CD4-positive, alpha-beta T cell (primary cell): ENCODE measurements at regions of chr1 and their contacts with region 1.

Region 1: GRCh38 chr1:202888531-202889360 is at the start of gene RABIF:
- DNase-seq: peak; percentile 94 to 99 (median 96)
- ATAC-seq: peak; percentile 90
- H3K4me3 ChIP-seq: peak within 1 kb of the TSS; percentile 77
- H3K4me3 Mint-ChIP-seq: peak within 1 kb of the TSS; percentile 99
- H3K27ac ChIP-seq: peak within 1 kb of the TSS; percentile 87 to 95
- H3K27ac Mint-ChIP-seq: peak within 1 kb of the TSS; percentile 94
- H3K4me1 ChIP-seq: peaks cover 20% of the 10 kb centered on the region
- H3K4me1 Mint-ChIP-seq: peaks cover 24% of the 10 kb centered on the region
- H3K27me3 ChIP-seq: no peaks in the 10 kb centered on the region
- H3K27me3 Mint-ChIP-seq: no peaks in the 10 kb centered on the region
- CTCF ChIP-seq: peak; percentile 16
- total RNA-seq, gene RABIF: 9.1 to 9.2 TPM

Region 2: GRCh38 chr1:202144402-202145067 is 744.2 kb before region 1 on chr1 and contains the start of gene ARL8A:
- CTCF ChIA-PET with region 1: no interaction called
- POLR2A ChIA-PET with region 1: no interaction called
- intact Hi-C with region 1: loop called in 1 of 2 experiments (anchors 10 kb)
- DNase-seq: peak; percentile 35 to 83 (median 65)
- ATAC-seq: peak; percentile 75
- H3K4me3 ChIP-seq: peak within 1 kb of the TSS; percentile 89
- H3K4me3 Mint-ChIP-seq: peak within 1 kb of the TSS; percentile 97
- H3K27ac ChIP-seq: peak within 1 kb of the TSS; percentile 69 to 71
- H3K27ac Mint-ChIP-seq: peak within 1 kb of the TSS; percentile 94
- H3K4me1 ChIP-seq: peaks cover 40% of the 10 kb centered on the region
- H3K4me1 Mint-ChIP-seq: peaks cover 45% of the 10 kb centered on the region
- H3K27me3 ChIP-seq: no peaks in the 10 kb centered on the region
- H3K27me3 Mint-ChIP-seq: no peaks in the 10 kb centered on the region
- CTCF ChIP-seq: no peak
- total RNA-seq, gene ARL8A: 73.5 to 73.8 TPM

Region 3: DNA sequence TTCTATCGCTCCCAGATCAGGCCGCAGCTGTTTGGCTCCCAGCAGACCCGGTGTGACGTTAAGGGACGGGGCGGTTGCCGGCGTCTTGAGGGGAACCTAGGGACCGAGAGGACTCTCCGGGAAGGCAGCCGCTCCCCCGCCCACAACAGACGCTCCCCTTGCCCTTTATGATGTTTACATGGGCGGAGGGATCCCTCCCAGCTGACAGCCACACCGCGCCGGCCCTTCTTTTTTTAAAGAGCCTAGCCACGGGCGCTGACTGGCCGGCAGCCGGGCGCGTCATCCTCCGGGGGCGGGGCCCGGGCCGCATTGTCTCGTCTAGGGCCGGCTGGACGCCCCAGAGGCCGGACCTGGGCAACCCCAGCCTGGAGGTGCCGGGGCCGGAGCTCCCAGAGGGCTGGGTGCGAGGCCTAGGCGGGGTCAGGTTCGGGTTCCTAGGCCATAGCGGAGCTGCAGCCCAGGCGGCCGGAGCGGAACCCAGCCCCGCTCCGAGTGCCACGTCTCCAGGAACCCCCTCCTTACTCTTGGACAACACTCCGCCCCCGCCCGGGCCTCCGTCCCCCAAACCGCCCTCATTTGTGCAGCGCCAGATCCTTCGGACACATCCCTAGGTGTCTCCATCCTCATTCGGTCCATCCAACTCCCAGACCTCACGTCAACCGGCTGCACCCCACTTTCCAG is 78.0 kb before region 1 on chr1 and contains the start of gene PCAT6:
- CTCF ChIA-PET with region 1: interaction called, 4 read pairs
- POLR2A ChIA-PET with region 1: interaction called, 8 read pairs
- intact Hi-C with region 1: loop called (anchors 2 to 5 kb)
- DNase-seq: peak; percentile 67 to 93 (median 81)
- ATAC-seq: peak; percentile 67
- H3K4me3 ChIP-seq: peak within 1 kb of the TSS; percentile 96
- H3K4me3 Mint-ChIP-seq: peak within 1 kb of the TSS; percentile 90
- H3K27ac ChIP-seq: peak within 1 kb of the TSS in 1 of 2 donors; percentile 35
- H3K27ac Mint-ChIP-seq: peak within 1 kb of the TSS; percentile 80
- H3K4me1 ChIP-seq: peaks cover 33% of the 10 kb centered on the region
- H3K4me1 Mint-ChIP-seq: peaks cover 38% of the 10 kb centered on the region
- H3K27me3 ChIP-seq: no peaks in the 10 kb centered on the region
- H3K27me3 Mint-ChIP-seq: no peaks in the 10 kb centered on the region
- CTCF ChIP-seq: no peak
- total RNA-seq, gene PCAT6: 0.91 to 1.3 TPM

Region 4: GRCh38 chr1:202821452-202821851 is 67.3 kb before region 1 on chr1:
- CTCF ChIA-PET with region 1: no interaction called
- POLR2A ChIA-PET with region 1: no interaction called
- intact Hi-C with region 1: no loop called
- DNase-seq: no peak
- ATAC-seq: no peak
- H3K4me3 ChIP-seq: no peak overlapping the region
- H3K4me3 Mint-ChIP-seq: no peak overlapping the region
- H3K27ac ChIP-seq: no peak overlapping the region
- H3K27ac Mint-ChIP-seq: no peak overlapping the region
- H3K4me1 ChIP-seq: no peaks in the 10 kb centered on the region
- H3K4me1 Mint-ChIP-seq: no peaks in the 10 kb centered on the region
- H3K27me3 ChIP-seq: no peaks in the 10 kb centered on the region
- H3K27me3 Mint-ChIP-seq: peaks cover 3% of the 10 kb centered on the region
- CTCF ChIP-seq: no peak

Region 5: GRCh38 chr1:202919615-202920014 is 30.9 kb after region 1 on chr1:
- CTCF ChIA-PET with region 1: no interaction called
- POLR2A ChIA-PET with region 1: no interaction called
- intact Hi-C with region 1: no loop called
- DNase-seq: no peak
- ATAC-seq: no peak
- H3K4me3 ChIP-seq: no peak overlapping the region
- H3K4me3 Mint-ChIP-seq: no peak overlapping the region
- H3K27ac ChIP-seq: no peak overlapping the region
- H3K27ac Mint-ChIP-seq: no peak overlapping the region
- H3K4me1 ChIP-seq: peaks cover 3% of the 10 kb centered on the region
- H3K4me1 Mint-ChIP-seq: peaks cover 24% of the 10 kb centered on the region
- H3K27me3 ChIP-seq: no peaks in the 10 kb centered on the region
- H3K27me3 Mint-ChIP-seq: no peaks in the 10 kb centered on the region
- CTCF ChIP-seq: no peak

Region 6: DNA sequence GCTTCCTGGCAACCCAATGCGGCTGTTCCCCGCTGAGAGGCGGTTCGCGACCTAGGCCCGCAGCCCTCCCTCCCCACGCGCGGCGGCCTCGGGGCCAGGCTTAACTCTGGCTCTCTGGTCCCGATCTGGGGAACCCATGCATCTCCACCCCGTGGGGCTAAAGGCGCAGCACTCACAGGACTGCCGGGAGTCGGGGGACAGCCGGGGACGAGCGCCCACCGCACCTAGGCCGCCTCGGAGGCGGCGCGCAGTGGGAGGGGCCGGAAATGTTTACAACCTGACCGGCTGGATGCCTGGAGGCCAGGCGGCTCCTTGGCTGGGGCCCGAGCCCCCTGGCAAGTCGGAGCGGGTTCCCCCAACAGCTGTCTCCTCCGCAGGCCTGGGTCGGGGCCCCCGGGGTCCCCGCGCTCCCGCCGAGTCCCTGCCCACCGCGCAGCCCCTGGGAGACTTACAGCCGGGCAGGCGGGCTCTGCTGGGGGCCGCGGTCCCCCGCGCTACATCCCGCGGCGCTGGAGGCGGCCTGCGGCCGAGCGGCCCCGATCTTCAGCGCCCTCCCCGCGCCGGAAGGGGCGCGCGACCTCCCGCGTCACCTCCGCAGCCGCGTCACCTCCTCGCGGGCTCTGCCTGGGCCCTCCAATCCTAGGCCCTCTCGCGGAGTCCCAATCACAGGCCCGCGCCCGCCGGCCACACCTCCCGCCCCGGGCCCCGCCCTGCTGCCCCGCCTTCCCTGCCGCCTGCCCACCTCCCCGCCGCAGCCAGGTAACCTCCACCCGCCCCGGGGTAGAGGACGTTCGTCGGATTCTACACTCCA is 69.2 kb after region 1 on chr1 and contains the start of gene ADIPOR1:
- CTCF ChIA-PET with region 1: no interaction called
- POLR2A ChIA-PET with region 1: interaction called, 3 read pairs
- intact Hi-C with region 1: loop called in 1 of 2 experiments (anchors 2 kb)
- DNase-seq: peak; percentile 88 to 97 (median 95)
- ATAC-seq: peak; percentile 96
- H3K4me3 ChIP-seq: peak within 1 kb of the TSS; percentile 98
- H3K4me3 Mint-ChIP-seq: peak within 1 kb of the TSS; percentile 98
- H3K27ac ChIP-seq: peak within 1 kb of the TSS; percentile 81
- H3K27ac Mint-ChIP-seq: peak within 1 kb of the TSS; percentile 95
- H3K4me1 ChIP-seq: peaks cover 38% of the 10 kb centered on the region
- H3K4me1 Mint-ChIP-seq: peaks cover 55% of the 10 kb centered on the region
- H3K27me3 ChIP-seq: no peaks in the 10 kb centered on the region
- H3K27me3 Mint-ChIP-seq: no peaks in the 10 kb centered on the region
- CTCF ChIP-seq: peak; percentile 22
- total RNA-seq, gene ADIPOR1: 91.5 to 95.6 TPM

Region 7: GRCh38 chr1:202998836-202999750 is 110.3 kb after region 1 on chr1:
- CTCF ChIA-PET with region 1: interaction called, 3 read pairs
- POLR2A ChIA-PET with region 1: no interaction called
- intact Hi-C with region 1: loop called (anchors 2 to 5 kb)
- DNase-seq: peak; percentile 29 to 83 (median 58)
- ATAC-seq: peak; percentile 59
- H3K4me3 ChIP-seq: no peak overlapping the region
- H3K4me3 Mint-ChIP-seq: no peak overlapping the region
- H3K27ac ChIP-seq: no peak overlapping the region
- H3K27ac Mint-ChIP-seq: no peak overlapping the region
- H3K4me1 ChIP-seq: peaks cover 4% of the 10 kb centered on the region
- H3K4me1 Mint-ChIP-seq: peaks cover 7% of the 10 kb centered on the region
- H3K27me3 ChIP-seq: peaks cover 0 to 14% of the 10 kb centered on the region in 2 experiments
- H3K27me3 Mint-ChIP-seq: peaks cover 33% of the 10 kb centered on the region
- CTCF ChIP-seq: peak; percentile 91

Region 8: DNA sequence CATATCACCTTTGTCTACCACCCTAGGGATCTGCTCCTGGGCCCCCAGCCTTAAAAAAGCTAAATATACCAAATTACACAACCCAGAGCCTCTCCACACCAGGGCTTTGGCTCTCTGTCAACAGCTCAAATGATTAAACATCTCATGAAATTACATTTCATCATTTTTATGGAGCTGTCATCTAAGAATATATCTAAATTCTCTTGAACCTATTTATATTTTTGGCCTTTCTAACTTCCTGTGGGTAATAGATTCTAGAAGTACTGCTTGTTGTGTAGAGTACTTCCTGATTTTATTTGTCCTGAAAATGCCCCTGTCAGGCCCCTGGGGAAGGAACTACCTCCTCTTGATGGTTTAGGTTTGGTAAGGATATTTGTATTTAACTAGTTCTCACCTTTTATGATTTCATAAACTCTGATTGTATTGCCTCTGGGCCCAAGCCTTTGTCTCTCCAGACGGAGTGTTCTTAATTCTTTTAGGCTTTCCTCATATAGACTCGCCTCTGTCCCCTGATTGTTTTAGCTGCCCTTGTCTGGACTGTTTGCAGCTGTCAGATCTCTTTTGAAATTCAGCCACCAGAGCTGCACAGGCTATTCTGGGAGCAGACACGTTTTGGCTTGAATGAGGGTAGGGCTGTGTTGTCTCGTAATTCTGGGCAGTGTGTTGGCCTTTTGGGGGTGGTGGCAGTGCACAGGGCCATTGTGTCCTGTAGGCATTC is 180.4 kb after region 1 on chr1:
- CTCF ChIA-PET with region 1: no interaction called
- POLR2A ChIA-PET with region 1: no interaction called
- intact Hi-C with region 1: no loop called
- DNase-seq: peak in 1 of 14 experiments; percentile 7
- ATAC-seq: no peak
- H3K4me3 ChIP-seq: no peak overlapping the region
- H3K4me3 Mint-ChIP-seq: no peak overlapping the region
- H3K27ac ChIP-seq: no peak overlapping the region
- H3K27ac Mint-ChIP-seq: no peak overlapping the region
- H3K4me1 ChIP-seq: no peaks in the 10 kb centered on the region
- H3K4me1 Mint-ChIP-seq: no peaks in the 10 kb centered on the region
- H3K27me3 ChIP-seq: peaks cover 3 to 8% of the 10 kb centered on the region in 2 experiments
- H3K27me3 Mint-ChIP-seq: peaks cover 13% of the 10 kb centered on the region
- CTCF ChIP-seq: no peak